ENCODE measurements at regions of chr5 and their contacts with region 1.

Region 1: GRCh38 chr5:140725799-140726471 is 25.7 kb downstream of the ZMAT2 start:
- DNase-seq: peak; percentile 99
- H3K4me3 Mint-ChIP-seq: peak overlapping the region; percentile 72
- H3K27ac Mint-ChIP-seq: peak overlapping the region; percentile 42
- H3K4me1 Mint-ChIP-seq: peaks cover 6% of the 10 kb centered on the region
- H3K27me3 Mint-ChIP-seq: no peaks in the 10 kb centered on the region
- CTCF ChIP-seq: no peak

Region 2: DNA sequence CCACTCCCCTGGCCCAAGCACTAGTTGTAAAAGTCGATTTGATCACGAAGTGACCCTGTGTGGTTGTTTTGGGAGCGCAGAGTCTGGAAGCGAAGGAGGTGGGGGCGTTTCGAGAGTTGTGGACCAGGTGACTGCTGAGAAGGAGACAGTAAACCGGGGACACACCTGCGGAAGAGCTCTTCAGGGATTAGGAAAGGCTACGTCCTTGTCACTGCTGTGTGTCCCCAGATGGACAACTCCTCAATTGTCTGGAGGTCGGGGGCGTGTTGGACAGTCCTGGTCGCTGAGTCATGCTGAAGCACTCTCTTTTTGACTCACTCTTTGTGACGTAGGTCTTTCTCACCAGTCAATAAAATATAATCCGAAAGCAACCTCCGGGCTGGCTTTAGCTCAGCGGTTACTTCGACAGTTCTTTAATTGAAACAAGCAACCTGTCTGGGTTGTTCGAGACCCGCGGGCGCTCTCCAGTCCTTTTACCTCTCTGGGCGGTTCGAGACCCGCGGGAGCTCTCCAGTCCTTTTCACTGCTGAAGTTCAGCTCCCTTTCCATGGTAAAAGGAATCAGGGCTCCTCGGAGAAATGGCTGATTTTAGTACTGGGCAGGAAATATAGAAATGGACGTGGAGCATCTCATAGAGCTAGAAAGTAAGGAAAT is 14.9 kb before region 1 on chr5:
- CTCF ChIA-PET with region 1: interaction called, 11 read pairs
- POLR2A ChIA-PET with region 1: interaction called, 72 read pairs
- intact Hi-C with region 1: no loop called
- DNase-seq: peak; percentile 99
- H3K4me3 Mint-ChIP-seq: peak overlapping the region; percentile 88
- H3K27ac Mint-ChIP-seq: peak overlapping the region; percentile 94
- H3K4me1 Mint-ChIP-seq: peaks cover 5% of the 10 kb centered on the region
- H3K27me3 Mint-ChIP-seq: no peaks in the 10 kb centered on the region
- CTCF ChIP-seq: no peak

Measured in MCF 10A (cell line).